Activated CD4-positive, alpha-beta memory T cell treated with anti-CD3 and anti-CD28 coated beads, Interleukin-2, amount 10 ng/mL, durations not matched to agents 7 days and 5 days (primary cell): ENCODE measurements at regions of chr17 and their contacts with region 1.

Region 1: GRCh38 chr17:63827002-63827771 is at the starts of genes FTSJ3 and PSMC5:
- DNase-seq: peak; percentile 96
- H3K4me3 Mint-ChIP-seq: peak within 1 kb of the TSS; percentile 89
- H3K27ac Mint-ChIP-seq: peak within 1 kb of the TSS; percentile 93
- H3K4me1 Mint-ChIP-seq: peaks cover 82% of the 10 kb centered on the region
- H3K27me3 Mint-ChIP-seq: no peaks in the 10 kb centered on the region
- total RNA-seq, gene FTSJ3: 38.9 to 43.8 TPM
- total RNA-seq, gene PSMC5: 152 to 162 TPM

Region 2: DNA sequence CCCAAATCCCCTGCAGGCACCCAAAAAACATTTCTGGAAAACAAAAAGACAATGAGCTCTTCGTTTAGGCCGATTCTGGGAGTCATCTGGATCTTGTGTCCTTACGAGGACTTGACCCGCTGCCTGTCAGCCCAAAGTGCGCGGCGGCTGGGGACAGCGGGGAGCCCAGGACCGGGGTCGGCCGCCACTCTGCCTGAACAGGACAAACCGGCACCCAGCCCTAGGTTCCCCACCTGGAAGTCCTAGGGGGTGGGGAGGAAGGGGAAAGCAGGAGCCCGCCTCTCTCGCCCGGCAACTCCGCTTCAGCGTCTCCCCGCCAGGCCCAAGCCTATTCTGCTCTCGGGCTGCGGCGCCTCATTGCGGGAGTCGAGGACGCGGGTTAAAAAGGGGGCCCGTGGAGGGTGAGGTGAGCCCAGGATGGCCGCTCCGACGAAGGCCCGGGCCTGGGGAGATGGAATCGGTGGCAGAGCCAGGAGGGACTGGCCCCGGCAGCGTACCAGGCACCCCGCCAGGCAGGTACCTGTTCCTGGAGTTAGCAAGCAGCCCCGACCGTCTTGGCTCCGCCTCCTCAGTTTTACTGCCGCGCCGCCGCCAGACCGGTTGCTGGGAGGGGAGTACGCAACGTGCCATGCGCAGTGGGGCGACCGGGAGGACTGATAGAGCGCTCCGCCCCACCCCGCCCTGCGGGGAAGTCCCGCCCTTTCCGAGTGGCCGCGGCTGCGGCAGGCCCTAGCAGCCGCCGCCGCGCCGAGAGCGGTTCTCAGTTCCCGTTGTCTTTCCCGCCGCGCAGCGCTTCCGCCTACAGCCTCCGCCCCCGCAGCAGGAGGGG is 85.8 kb before region 1 on chr17 and contains the start of gene STRADA:
- CTCF ChIA-PET with region 1: no interaction called
- POLR2A ChIA-PET with region 1: interaction called, 13 read pairs
- DNase-seq: peak; percentile 99
- H3K4me3 Mint-ChIP-seq: peak within 1 kb of the TSS; percentile 90
- H3K27ac Mint-ChIP-seq: peak within 1 kb of the TSS; percentile 93
- H3K4me1 Mint-ChIP-seq: peaks cover 33% of the 10 kb centered on the region
- H3K27me3 Mint-ChIP-seq: no peaks in the 10 kb centered on the region
- total RNA-seq, gene STRADA: 53.1 to 59.4 TPM

Region 3: GRCh38 chr17:63842540-63843386 is 15.6 kb after region 1 on chr17 and contains the start of gene SMARCD2:
- CTCF ChIA-PET with region 1: interaction called, 28 read pairs
- POLR2A ChIA-PET with region 1: interaction called, 194 read pairs
- DNase-seq: peak; percentile 99
- H3K4me3 Mint-ChIP-seq: peak within 1 kb of the TSS; percentile 97
- H3K27ac Mint-ChIP-seq: peak within 1 kb of the TSS; percentile 96
- H3K4me1 Mint-ChIP-seq: peaks cover 46% of the 10 kb centered on the region
- H3K27me3 Mint-ChIP-seq: no peaks in the 10 kb centered on the region
- total RNA-seq, gene SMARCD2: 150 to 152 TPM

Region 4: DNA sequence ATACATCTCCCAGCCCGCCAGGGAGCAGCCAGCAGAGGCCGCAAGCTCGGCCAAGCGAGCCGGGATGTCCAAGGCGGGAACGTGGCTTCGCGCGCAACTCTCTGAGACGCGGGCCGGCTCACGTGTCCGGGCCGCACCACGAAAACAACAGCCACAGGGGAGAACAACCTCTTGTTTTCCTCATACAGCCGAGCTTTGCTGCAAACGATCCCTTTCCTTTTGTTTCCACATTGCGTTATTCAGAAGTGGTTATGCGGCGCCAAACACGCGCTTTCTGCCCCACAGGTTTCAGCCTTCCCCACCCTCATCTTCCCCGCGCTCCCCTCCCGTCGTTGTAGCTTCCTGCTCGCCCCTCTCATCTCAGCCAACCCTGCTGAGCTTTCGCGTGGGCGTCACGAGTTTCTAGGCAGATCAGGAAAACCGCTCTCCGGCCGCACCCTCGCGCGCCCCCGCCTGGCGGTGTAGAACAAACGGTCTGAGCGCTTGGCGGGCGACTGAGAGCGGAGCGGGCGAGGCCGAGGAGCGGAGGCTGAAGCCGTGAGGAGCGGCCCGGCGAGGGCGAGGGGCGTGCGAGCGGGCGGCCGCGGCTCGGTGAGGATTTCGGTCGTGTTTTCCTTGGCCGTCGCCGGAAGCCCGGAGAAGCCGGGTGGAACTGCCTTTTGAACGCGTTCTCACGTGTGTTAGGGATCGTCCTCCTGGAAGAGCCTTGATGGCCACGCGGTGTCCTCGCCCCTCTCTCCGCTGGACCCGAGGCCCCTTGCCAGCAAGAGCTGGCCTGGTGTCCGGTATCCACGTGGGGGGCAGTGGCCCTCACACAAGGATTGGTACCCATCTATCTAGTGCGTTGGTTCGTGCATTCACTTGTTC is 21.9 kb after region 1 on chr17:
- CTCF ChIA-PET with region 1: interaction called, 27 read pairs
- POLR2A ChIA-PET with region 1: interaction called, 194 read pairs
- DNase-seq: peak; percentile 96
- H3K4me3 Mint-ChIP-seq: peak overlapping the region; percentile 61
- H3K27ac Mint-ChIP-seq: peak overlapping the region; percentile 86
- H3K4me1 Mint-ChIP-seq: peaks cover 27% of the 10 kb centered on the region
- H3K27me3 Mint-ChIP-seq: peaks cover 15% of the 10 kb centered on the region